ENCODE measurements at regions of chr20 and their contacts with region 1.

Region 1: GRCh38 chr20:50987592-50988210 is 29.1 kb downstream of the MOCS3 start:
- DNase-seq: peak; percentile 26 to 84 (median 51)
- ATAC-seq: peak; percentile 94
- H3K4me3 ChIP-seq: no peak overlapping the region
- H3K4me3 Mint-ChIP-seq: no peak overlapping the region
- H3K27ac ChIP-seq: no peak overlapping the region
- H3K27ac Mint-ChIP-seq: no peak overlapping the region
- H3K4me1 ChIP-seq: no peaks in the 10 kb centered on the region
- H3K4me1 Mint-ChIP-seq: peaks cover 2% of the 10 kb centered on the region
- H3K27me3 ChIP-seq: peaks cover 3 to 7% of the 10 kb centered on the region in 2 experiments
- H3K27me3 Mint-ChIP-seq: peaks cover 26% of the 10 kb centered on the region
- CTCF ChIP-seq: peak; percentile 94

Region 2: GRCh38 chr20:51295575-51295974 is 307.9 kb after region 1 on chr20:
- CTCF ChIA-PET with region 1: interaction called, 10 read pairs
- POLR2A ChIA-PET with region 1: no interaction called
- intact Hi-C with region 1: no loop called
- DNase-seq: no peak
- ATAC-seq: no peak
- H3K4me3 ChIP-seq: no peak overlapping the region
- H3K4me3 Mint-ChIP-seq: no peak overlapping the region
- H3K27ac ChIP-seq: no peak overlapping the region
- H3K27ac Mint-ChIP-seq: no peak overlapping the region
- H3K4me1 ChIP-seq: no peaks in the 10 kb centered on the region
- H3K4me1 Mint-ChIP-seq: no peaks in the 10 kb centered on the region
- H3K27me3 ChIP-seq: no peaks in the 10 kb centered on the region
- H3K27me3 Mint-ChIP-seq: peaks cover 20% of the 10 kb centered on the region
- CTCF ChIP-seq: no peak

Region 3: GRCh38 chr20:51313358-51313881 is 325.7 kb after region 1 on chr20:
- CTCF ChIA-PET with region 1: interaction called, 184 read pairs
- POLR2A ChIA-PET with region 1: interaction called, 5 read pairs
- intact Hi-C with region 1: no loop called
- DNase-seq: no peak
- ATAC-seq: no peak
- H3K4me3 ChIP-seq: no peak overlapping the region
- H3K4me3 Mint-ChIP-seq: no peak overlapping the region
- H3K27ac ChIP-seq: no peak overlapping the region
- H3K27ac Mint-ChIP-seq: no peak overlapping the region
- H3K4me1 ChIP-seq: peaks cover 6% of the 10 kb centered on the region
- H3K4me1 Mint-ChIP-seq: no peaks in the 10 kb centered on the region
- H3K27me3 ChIP-seq: no peaks in the 10 kb centered on the region
- H3K27me3 Mint-ChIP-seq: peaks cover 5% of the 10 kb centered on the region
- CTCF ChIP-seq: no peak

Region 4: DNA sequence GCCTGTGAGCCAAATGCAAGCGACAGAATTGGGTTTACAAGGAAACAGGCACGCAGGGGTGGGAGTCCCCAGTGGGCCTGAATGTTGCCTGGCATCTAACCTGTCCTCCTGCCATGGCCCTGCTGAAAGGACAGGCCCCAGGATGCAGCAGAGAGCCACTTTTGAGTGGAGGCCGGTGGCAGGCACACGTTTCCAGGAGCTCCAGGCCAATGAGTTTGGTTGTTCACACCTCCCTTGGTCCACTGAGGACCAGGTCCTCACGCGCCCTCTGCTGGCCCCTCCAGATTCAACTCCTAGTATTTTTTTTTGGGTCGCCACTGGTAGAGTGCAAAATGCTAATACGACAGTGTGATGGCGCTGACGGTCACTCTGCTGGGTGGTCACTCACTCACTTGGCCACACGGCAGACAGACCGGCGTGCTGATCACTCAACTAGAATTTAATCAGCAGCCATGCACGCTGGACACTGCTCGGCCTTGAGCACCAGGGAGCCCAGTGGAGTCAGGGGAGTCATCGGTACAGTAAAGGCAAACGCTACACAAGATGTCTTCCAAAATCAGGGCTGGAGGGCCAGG is 636.5 kb after region 1 on chr20:
- CTCF ChIA-PET with region 1: interaction called, 8 read pairs
- POLR2A ChIA-PET with region 1: no interaction called
- intact Hi-C with region 1: loop called in 1 of 2 experiments (anchors 1 kb)
- DNase-seq: peak; percentile 22 to 69 (median 58)
- ATAC-seq: peak; percentile 52
- H3K4me3 ChIP-seq: no peak overlapping the region
- H3K4me3 Mint-ChIP-seq: no peak overlapping the region
- H3K27ac ChIP-seq: no peak overlapping the region
- H3K27ac Mint-ChIP-seq: no peak overlapping the region
- H3K4me1 ChIP-seq: no peaks in the 10 kb centered on the region
- H3K4me1 Mint-ChIP-seq: peaks cover 2% of the 10 kb centered on the region
- H3K27me3 ChIP-seq: no peaks in the 10 kb centered on the region
- H3K27me3 Mint-ChIP-seq: peaks cover 3% of the 10 kb centered on the region
- CTCF ChIP-seq: peak; percentile 69

Region 5: DNA sequence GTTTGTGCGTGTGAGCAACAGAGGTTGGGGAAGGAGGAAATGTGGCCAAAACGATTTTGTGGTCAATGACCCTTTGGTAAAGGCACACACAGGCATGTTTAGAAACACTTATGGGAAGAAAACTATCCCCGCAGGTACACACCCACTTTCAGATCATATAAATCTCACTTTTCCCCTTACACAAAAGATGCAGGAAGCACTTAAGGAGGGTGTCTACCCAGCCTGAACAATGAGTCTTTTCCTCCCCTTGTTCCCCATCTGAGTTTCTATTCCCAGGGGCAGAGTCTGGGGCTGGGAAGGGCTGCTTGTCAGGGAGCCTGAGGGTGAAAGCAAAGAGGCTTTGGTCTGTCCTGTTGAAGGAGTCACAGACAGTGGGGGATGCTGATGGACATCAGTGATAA is 1007.9 kb after region 1 on chr20:
- CTCF ChIA-PET with region 1: no interaction called
- POLR2A ChIA-PET with region 1: no interaction called
- intact Hi-C with region 1: no loop called
- DNase-seq: no peak
- ATAC-seq: no peak
- H3K4me3 ChIP-seq: no peak overlapping the region
- H3K4me3 Mint-ChIP-seq: no peak overlapping the region
- H3K27ac ChIP-seq: no peak overlapping the region
- H3K27ac Mint-ChIP-seq: no peak overlapping the region
- H3K4me1 ChIP-seq: no peaks in the 10 kb centered on the region
- H3K4me1 Mint-ChIP-seq: no peaks in the 10 kb centered on the region
- H3K27me3 ChIP-seq: no peaks in the 10 kb centered on the region
- H3K27me3 Mint-ChIP-seq: peaks cover 2% of the 10 kb centered on the region
- CTCF ChIP-seq: no peak

Region 6: GRCh38 chr20:52150440-52151258 is 1162.9 kb after region 1 on chr20:
- CTCF ChIA-PET with region 1: interaction called, 6 read pairs
- POLR2A ChIA-PET with region 1: no interaction called
- intact Hi-C with region 1: loop called (anchors 1 to 2 kb)
- DNase-seq: peak in 3 of 9 experiments; percentile 20 to 53 (median 44)
- ATAC-seq: no peak
- H3K4me3 ChIP-seq: no peak overlapping the region
- H3K4me3 Mint-ChIP-seq: no peak overlapping the region
- H3K27ac ChIP-seq: no peak overlapping the region
- H3K27ac Mint-ChIP-seq: no peak overlapping the region
- H3K4me1 ChIP-seq: no peaks in the 10 kb centered on the region
- H3K4me1 Mint-ChIP-seq: no peaks in the 10 kb centered on the region
- H3K27me3 ChIP-seq: no peaks in the 10 kb centered on the region
- H3K27me3 Mint-ChIP-seq: no peaks in the 10 kb centered on the region
- CTCF ChIP-seq: peak; percentile 96

Measured in CD8-positive, alpha-beta T cell (primary cell).